WTC11 (cell line): ENCODE measurements at regions of chr13 and their contacts with region 1.

Region 1: DNA sequence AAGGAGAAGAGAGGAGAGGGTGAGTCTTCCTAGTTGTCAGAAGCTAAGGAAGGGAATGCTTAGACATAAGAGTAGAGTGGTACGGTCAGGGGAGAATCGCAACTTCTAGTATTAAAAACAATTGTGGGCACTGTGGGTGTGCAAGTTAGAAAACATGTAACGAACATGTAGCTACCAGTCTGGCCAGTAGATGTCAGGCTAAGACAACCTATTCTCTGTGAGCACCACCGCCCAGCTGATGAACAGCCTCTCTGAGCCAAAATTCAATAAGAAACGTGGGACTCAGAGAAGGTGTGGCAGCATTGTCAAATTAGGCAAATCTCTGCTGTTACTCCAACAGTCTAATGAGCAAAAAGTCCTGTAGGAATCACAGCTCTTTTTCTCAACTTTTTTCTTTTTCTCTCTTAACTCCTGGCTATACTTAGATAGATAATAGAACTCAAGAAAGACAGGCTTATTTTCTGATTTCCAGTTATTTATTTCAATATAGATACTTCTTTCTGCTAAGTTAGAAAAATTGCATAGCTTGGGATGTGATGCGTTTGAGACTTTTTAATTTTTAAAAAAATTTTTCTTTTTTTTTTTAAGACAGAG is 186.2 kb downstream of the USP12 start:
- DNase-seq: peak; percentile 64
- ATAC-seq: peak; percentile 80
- H3K4me3 Mint-ChIP-seq: no peak overlapping the region
- H3K27ac Mint-ChIP-seq: no peak overlapping the region
- H3K4me1 Mint-ChIP-seq: peaks cover 12% of the 10 kb centered on the region
- H3K27me3 Mint-ChIP-seq: no peaks in the 10 kb centered on the region; the same call in 1 of the 2 replicates
- CTCF ChIP-seq: peak; percentile 60

Region 2: GRCh38 chr13:26971990-26972887 is 13.1 kb before region 1 on chr13:
- CTCF ChIA-PET with region 1: interaction called, 35 read pairs
- POLR2A ChIA-PET with region 1: no interaction called
- DNase-seq: peak; percentile 61
- ATAC-seq: peak; percentile 89
- H3K4me3 Mint-ChIP-seq: no peak overlapping the region
- H3K27ac Mint-ChIP-seq: no peak overlapping the region
- H3K4me1 Mint-ChIP-seq: no peaks in the 10 kb centered on the region; the same call in 1 of the 2 replicates
- H3K27me3 Mint-ChIP-seq: no peaks in the 10 kb centered on the region
- CTCF ChIP-seq: peak; percentile 15; the same call in 1 of the 2 replicates

Region 3: DNA sequence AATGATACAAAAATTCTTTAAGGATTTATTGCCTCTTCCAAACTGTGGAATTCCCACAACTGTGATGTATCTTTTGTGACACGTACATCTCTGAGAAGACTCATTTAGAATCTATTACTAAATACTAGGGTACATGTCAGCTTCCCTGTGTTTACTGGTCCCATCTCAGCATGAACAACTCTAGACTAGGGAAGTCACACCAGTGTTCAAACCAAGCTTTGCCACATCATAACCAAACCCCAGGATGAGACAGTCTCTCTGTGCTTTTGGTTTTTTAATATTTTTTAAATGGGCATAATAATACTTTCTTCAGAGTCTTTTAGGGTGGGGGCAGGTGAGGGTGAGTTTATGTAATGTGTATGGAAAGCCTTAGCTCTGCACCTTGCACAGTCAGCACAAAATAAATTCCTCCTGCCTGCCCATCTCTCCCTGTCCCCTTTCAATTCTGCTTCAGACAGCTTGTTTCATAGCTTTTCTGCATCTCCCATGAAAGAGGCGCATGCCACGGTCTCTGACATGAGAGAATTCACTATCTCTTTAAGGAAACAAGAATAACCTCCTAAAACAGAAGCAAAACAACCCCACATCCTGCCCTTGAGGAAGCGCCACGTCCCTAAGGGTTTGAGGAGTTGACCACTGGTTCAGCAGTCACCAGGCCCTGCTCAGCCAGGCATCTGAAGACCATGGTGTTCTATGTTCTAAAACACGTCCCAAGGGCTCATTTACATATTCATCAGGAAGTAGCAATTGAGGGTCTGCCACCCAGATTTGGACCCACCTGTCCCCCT is 11.8 kb after region 1 on chr13:
- CTCF ChIA-PET with region 1: interaction called, 11 read pairs
- POLR2A ChIA-PET with region 1: no interaction called
- DNase-seq: no peak
- ATAC-seq: no peak
- H3K4me3 Mint-ChIP-seq: no peak overlapping the region
- H3K27ac Mint-ChIP-seq: no peak overlapping the region
- H3K4me1 Mint-ChIP-seq: peaks cover 4% of the 10 kb centered on the region; the same call in 1 of the 2 replicates
- H3K27me3 Mint-ChIP-seq: no peaks in the 10 kb centered on the region
- CTCF ChIP-seq: no peak

Region 4: GRCh38 chr13:27353166-27353583 is 367.8 kb after region 1 on chr13:
- CTCF ChIA-PET with region 1: interaction called, 68 read pairs
- POLR2A ChIA-PET with region 1: no interaction called
- DNase-seq: no peak
- ATAC-seq: no peak
- H3K4me3 Mint-ChIP-seq: no peak overlapping the region
- H3K27ac Mint-ChIP-seq: 0 out of 2 replicates have a peak overlapping the region, but pooled peaks have one; percentile 12
- H3K4me1 Mint-ChIP-seq: peaks cover 25% of the 10 kb centered on the region
- H3K27me3 Mint-ChIP-seq: no peaks in the 10 kb centered on the region; the same call in 1 of the 2 replicates
- CTCF ChIP-seq: no peak